ENCODE measurements at regions of chr9 and their contacts with region 1.

Region 1: GRCh38 chr9:73104342-73104741 is 47.3 kb upstream of the ANXA1 start:
- DNase-seq: no peak
- H3K4me3 Mint-ChIP-seq: no peak overlapping the region
- H3K27ac Mint-ChIP-seq: no peak overlapping the region
- H3K4me1 Mint-ChIP-seq: no peaks in the 10 kb centered on the region
- H3K27me3 Mint-ChIP-seq: peaks cover 3% of the 10 kb centered on the region

Region 2: GRCh38 chr9:73067074-73067473 is 37.3 kb before region 1 on chr9:
- CTCF ChIA-PET with region 1: no interaction called
- POLR2A ChIA-PET with region 1: no interaction called
- intact Hi-C with region 1: no loop called
- DNase-seq: no peak
- H3K4me3 Mint-ChIP-seq: no peak overlapping the region
- H3K27ac Mint-ChIP-seq: no peak overlapping the region
- H3K4me1 Mint-ChIP-seq: no peaks in the 10 kb centered on the region
- H3K27me3 Mint-ChIP-seq: peaks cover 11% of the 10 kb centered on the region

Region 3: GRCh38 chr9:73093740-73094379 is 10.5 kb before region 1 on chr9:
- CTCF ChIA-PET with region 1: interaction called, 19 read pairs
- POLR2A ChIA-PET with region 1: no interaction called
- intact Hi-C with region 1: no loop called
- DNase-seq: no peak
- H3K4me3 Mint-ChIP-seq: peak overlapping the region; percentile 44
- H3K27ac Mint-ChIP-seq: no peak overlapping the region
- H3K4me1 Mint-ChIP-seq: peaks cover 3% of the 10 kb centered on the region
- H3K27me3 Mint-ChIP-seq: peaks cover 5% of the 10 kb centered on the region

Region 4: DNA sequence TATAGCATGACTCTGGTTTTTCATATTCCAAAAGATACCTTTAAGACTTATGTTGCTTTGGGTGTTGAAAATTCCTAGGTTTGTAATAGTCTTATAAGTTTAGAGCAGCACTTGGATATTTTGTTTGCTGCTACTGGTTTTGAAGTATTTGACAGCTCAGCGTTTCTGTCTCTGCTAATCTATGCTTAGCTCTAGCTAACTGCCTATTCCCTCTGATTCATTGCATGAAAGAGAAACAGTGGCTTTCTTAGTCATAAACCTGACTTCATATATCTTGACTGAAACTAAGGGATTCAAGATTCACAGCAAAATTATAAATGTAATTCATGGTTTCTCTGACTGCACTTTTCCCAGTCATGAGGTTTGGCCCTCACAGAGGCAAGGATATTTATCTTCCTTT is 11.7 kb after region 1 on chr9:
- CTCF ChIA-PET with region 1: interaction called, 26 read pairs
- POLR2A ChIA-PET with region 1: no interaction called
- intact Hi-C with region 1: no loop called
- DNase-seq: no peak
- H3K4me3 Mint-ChIP-seq: no peak overlapping the region
- H3K27ac Mint-ChIP-seq: no peak overlapping the region
- H3K4me1 Mint-ChIP-seq: peaks cover 42% of the 10 kb centered on the region
- H3K27me3 Mint-ChIP-seq: no peaks in the 10 kb centered on the region

Region 5: GRCh38 chr9:73121375-73121935 is 17.1 kb after region 1 on chr9:
- CTCF ChIA-PET with region 1: interaction called, 26 read pairs
- POLR2A ChIA-PET with region 1: no interaction called
- intact Hi-C with region 1: no loop called
- DNase-seq: no peak
- H3K4me3 Mint-ChIP-seq: no peak overlapping the region
- H3K27ac Mint-ChIP-seq: no peak overlapping the region
- H3K4me1 Mint-ChIP-seq: peaks cover 24% of the 10 kb centered on the region
- H3K27me3 Mint-ChIP-seq: no peaks in the 10 kb centered on the region

Region 6: DNA sequence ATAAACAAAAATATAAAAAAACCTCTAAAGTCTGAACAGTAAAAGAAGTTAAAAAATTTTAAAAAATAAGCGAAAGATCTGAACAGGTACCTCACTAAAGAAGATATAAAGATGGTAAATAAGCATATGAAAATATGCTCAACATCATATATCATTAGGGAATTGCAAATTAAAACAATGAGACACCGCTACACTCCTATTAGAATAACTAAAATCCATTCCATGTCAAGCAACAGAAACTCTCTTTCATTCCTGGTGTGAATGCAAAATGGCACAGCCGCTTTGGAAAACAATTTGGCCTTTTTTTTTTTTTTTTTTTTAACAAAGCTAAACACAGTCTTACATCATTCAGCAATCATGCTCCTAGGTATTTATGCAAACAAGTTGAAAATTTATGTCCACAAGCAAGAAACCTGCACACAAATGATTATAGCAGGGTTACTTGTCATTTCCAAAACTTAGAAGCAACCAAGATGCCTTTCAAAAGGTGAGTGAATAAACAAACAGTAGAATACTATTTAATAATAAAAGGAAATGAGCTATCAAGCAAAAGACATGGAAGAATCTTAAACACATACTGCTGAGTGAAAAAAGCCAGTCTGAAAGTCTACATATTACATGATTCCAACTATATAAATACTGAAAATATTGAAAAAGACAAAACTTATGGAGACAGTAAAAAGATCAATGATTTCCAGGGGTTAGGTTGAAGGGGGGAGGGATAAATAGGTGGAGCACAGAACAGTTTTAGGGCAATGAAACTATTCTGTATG is 69.4 kb after region 1 on chr9:
- CTCF ChIA-PET with region 1: interaction called, 204 read pairs
- POLR2A ChIA-PET with region 1: interaction called, 3 read pairs
- intact Hi-C with region 1: no loop called
- DNase-seq: no peak
- H3K4me3 Mint-ChIP-seq: no peak overlapping the region
- H3K27ac Mint-ChIP-seq: no peak overlapping the region
- H3K4me1 Mint-ChIP-seq: peaks cover 12% of the 10 kb centered on the region
- H3K27me3 Mint-ChIP-seq: no peaks in the 10 kb centered on the region

Region 7: GRCh38 chr9:73183917-73184861 is 79.8 kb after region 1 on chr9:
- CTCF ChIA-PET with region 1: interaction called, 204 read pairs
- POLR2A ChIA-PET with region 1: no interaction called
- intact Hi-C with region 1: loop called (anchors 1 kb)
- DNase-seq: no peak
- H3K4me3 Mint-ChIP-seq: no peak overlapping the region
- H3K27ac Mint-ChIP-seq: no peak overlapping the region
- H3K4me1 Mint-ChIP-seq: peaks cover 2% of the 10 kb centered on the region
- H3K27me3 Mint-ChIP-seq: peaks cover 5% of the 10 kb centered on the region

Region 8: DNA sequence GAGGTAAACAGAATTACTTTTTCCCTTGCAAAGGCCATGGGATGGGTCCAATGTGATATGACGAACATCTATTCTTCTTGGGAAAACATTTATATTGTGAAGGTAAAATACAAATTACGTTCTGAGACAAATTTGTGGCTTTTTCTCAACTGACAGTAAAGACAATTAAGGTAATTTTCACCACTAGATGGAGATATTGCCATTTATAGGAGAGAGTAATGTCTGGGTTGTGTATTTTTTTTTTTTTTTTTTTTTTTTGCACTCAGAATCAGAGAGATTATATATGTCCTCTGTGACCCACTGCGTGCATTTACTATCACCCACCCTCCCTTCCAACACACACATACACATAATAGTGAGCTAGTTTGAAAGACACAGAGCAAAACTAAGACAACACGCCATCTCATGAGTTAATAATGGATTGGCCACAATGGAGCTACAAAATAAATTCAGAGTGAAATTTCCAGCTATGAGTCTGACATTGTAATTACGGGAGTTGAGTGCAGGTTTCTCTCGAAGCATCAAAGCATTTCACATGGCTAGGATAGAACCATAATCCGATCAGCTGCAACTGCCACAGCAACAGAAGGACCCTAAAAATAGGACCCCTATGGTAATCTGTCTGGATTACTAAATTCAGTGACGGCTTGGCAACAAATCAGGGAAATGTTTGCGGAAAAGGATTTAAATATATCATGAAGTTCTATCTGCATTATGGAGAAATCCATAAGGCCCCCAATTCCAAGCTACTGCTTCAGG is 96.5 kb after region 1 on chr9:
- CTCF ChIA-PET with region 1: interaction called, 11 read pairs
- POLR2A ChIA-PET with region 1: no interaction called
- intact Hi-C with region 1: no loop called
- DNase-seq: no peak
- H3K4me3 Mint-ChIP-seq: no peak overlapping the region
- H3K27ac Mint-ChIP-seq: no peak overlapping the region
- H3K4me1 Mint-ChIP-seq: no peaks in the 10 kb centered on the region
- H3K27me3 Mint-ChIP-seq: peaks cover 19% of the 10 kb centered on the region

Region 9: GRCh38 chr9:73327149-73327548 is 222.8 kb after region 1 on chr9:
- CTCF ChIA-PET with region 1: no interaction called
- POLR2A ChIA-PET with region 1: no interaction called
- intact Hi-C with region 1: no loop called
- DNase-seq: no peak
- H3K4me3 Mint-ChIP-seq: no peak overlapping the region
- H3K27ac Mint-ChIP-seq: no peak overlapping the region
- H3K4me1 Mint-ChIP-seq: no peaks in the 10 kb centered on the region
- H3K27me3 Mint-ChIP-seq: no peaks in the 10 kb centered on the region

Measured in activated CD4-positive, alpha-beta memory T cell treated with anti-CD3 and anti-CD28 coated beads for 36 hours (primary cell).